ENCODE measurements at regions of chr9 and their contacts with region 1.

Region 1: GRCh38 chr9:112793213-112793810 is 42.8 kb downstream of the SNX30 start:
- DNase-seq: peak; percentile 70 to 78 (median 75)
- H3K4me3 ChIP-seq: no peak overlapping the region
- H3K4me3 Mint-ChIP-seq: no peak overlapping the region
- H3K27ac ChIP-seq: no peak overlapping the region
- H3K27ac Mint-ChIP-seq: peak overlapping the region in 4 of 7 donors; percentile 9 to 47 (median 37)
- H3K4me1 ChIP-seq: peaks cover 6% of the 10 kb centered on the region
- H3K4me1 Mint-ChIP-seq: peaks cover 9 to 34% (median 20%) of the 10 kb centered on the region in 4 donors
- H3K27me3 ChIP-seq: no peaks in the 10 kb centered on the region
- H3K27me3 Mint-ChIP-seq: no peaks in the 10 kb centered on the region

Region 2: DNA sequence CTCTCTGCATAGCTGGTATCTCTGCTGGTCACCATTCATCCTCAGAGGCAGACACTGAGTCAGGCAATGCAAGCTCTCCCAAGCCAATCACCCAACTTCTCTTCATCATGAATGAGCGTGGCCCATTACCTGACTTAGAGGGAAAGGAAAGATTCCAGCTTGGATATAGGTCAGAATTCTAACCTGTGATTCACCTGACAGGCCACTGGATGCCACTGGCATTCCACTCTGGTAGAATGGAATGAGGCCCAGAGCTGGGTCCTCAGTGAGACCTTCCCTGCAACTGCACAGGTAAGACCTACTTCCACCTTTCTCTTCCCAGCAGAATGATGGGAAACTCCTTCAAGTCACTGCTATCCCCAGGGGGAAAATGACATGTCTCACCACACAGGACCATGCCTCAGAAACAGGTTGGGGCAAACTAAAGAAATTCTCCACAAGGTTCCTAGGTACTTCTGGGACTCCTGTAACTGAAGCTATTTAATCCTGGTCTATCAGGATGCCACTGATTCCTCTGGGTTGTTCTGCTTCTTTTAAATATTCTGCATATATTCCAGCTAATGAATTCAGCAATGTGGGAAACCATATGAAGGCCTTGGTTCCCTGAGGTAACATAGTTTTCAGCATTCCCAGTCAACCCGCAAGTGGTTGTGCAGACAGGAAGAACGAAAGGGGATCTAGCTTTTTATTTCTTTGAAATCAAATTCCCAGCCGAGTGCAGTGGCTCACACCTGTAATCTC is 680.2 kb before region 1 on chr9:
- CTCF ChIA-PET with region 1: interaction called, 6 read pairs
- POLR2A ChIA-PET with region 1: no interaction called
- intact Hi-C with region 1: loop called (anchors 1 kb)
- DNase-seq: peak in 4 of 5 donors; percentile 18 to 28 (median 25)
- H3K4me3 ChIP-seq: no peak overlapping the region
- H3K4me3 Mint-ChIP-seq: no peak overlapping the region
- H3K27ac ChIP-seq: no peak overlapping the region
- H3K27ac Mint-ChIP-seq: peak overlapping the region in 1 of 7 donors; percentile 15
- H3K4me1 ChIP-seq: no peaks in the 10 kb centered on the region
- H3K4me1 Mint-ChIP-seq: no peaks in the 10 kb centered on the region
- H3K27me3 ChIP-seq: no peaks in the 10 kb centered on the region
- H3K27me3 Mint-ChIP-seq: no peaks in the 10 kb centered on the region

Region 3: GRCh38 chr9:112443200-112443599 is 350.1 kb before region 1 on chr9:
- CTCF ChIA-PET with region 1: interaction called, 44 read pairs
- POLR2A ChIA-PET with region 1: no interaction called
- intact Hi-C with region 1: no loop called
- DNase-seq: peak in 4 of 5 donors; percentile 14 to 28 (median 24)
- H3K4me3 ChIP-seq: no peak overlapping the region
- H3K4me3 Mint-ChIP-seq: no peak overlapping the region
- H3K27ac ChIP-seq: no peak overlapping the region
- H3K27ac Mint-ChIP-seq: no peak overlapping the region
- H3K4me1 ChIP-seq: no peaks in the 10 kb centered on the region
- H3K4me1 Mint-ChIP-seq: peaks cover 0 to 2% (median 0%) of the 10 kb centered on the region in 4 donors
- H3K27me3 ChIP-seq: no peaks in the 10 kb centered on the region
- H3K27me3 Mint-ChIP-seq: no peaks in the 10 kb centered on the region

Region 4: DNA sequence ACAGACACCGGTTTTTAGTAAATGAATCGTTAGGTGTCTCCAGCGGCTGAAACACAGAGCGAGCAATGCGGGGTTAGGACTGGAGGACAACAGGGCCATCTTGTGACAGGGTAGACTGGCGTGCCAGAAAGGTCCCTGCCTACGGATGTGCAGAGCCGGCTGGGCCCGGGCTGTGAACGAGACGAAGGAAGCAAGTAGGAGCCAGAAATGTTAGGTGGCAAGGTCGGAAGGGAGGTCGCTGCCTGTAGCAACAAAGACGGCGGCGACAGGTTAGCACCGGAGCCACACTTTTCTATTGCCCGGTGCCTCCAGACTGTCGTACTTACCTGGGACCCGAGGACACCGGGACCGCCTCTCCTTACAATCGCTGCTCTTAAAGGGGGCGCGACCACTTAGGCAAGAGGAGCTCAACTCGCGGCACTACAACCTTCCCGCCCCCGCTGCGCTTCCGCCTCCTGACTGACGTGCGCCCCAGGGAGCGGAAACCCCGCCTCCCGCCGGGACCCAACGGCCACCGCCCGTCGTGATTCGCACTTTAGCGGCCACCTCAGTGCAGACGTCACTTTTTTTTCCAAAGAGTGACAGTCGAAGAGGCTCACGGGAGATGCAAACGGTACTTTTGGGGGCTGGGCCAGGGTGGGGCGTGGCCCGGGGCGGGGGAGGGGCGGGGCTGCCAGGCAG is 75.5 kb before region 1 on chr9 and contains the start of gene INIP:
- CTCF ChIA-PET with region 1: interaction called, 44 read pairs
- POLR2A ChIA-PET with region 1: interaction called, 7 read pairs
- intact Hi-C with region 1: loop called (anchors 1 kb)
- DNase-seq: peak; percentile 97 to 98 (median 98)
- H3K4me3 ChIP-seq: peak within 1 kb of the TSS; percentile 78 to 95
- H3K4me3 Mint-ChIP-seq: peak within 1 kb of the TSS; percentile 93 to 99 (median 98)
- H3K27ac ChIP-seq: peak within 1 kb of the TSS; percentile 88
- H3K27ac Mint-ChIP-seq: peak within 1 kb of the TSS; percentile 94 to 99 (median 99)
- H3K4me1 ChIP-seq: peaks cover 25% of the 10 kb centered on the region
- H3K4me1 Mint-ChIP-seq: peaks cover 15 to 37% (median 26%) of the 10 kb centered on the region in 4 donors
- H3K27me3 ChIP-seq: no peaks in the 10 kb centered on the region
- H3K27me3 Mint-ChIP-seq: no peaks in the 10 kb centered on the region
- total RNA-seq, gene INIP: 25.2 to 33.4 TPM